ENCODE measurements at regions of chr4 and their contacts with region 1.

Region 1: GRCh38 chr4:140861359-140862176 is 105.4 kb upstream of the TBC1D9 start:
- DNase-seq: peak in 1 of 2 donors; percentile 14
- ATAC-seq: peak; percentile 80 to 88 (median 83)
- H3K4me3 ChIP-seq: no peak overlapping the region
- H3K27ac ChIP-seq: no peak overlapping the region
- H3K4me1 ChIP-seq: peaks cover 6% of the 10 kb centered on the region
- H3K27me3 ChIP-seq: no peaks in the 10 kb centered on the region
- CTCF ChIP-seq: peak; percentile 86

Region 2: DNA sequence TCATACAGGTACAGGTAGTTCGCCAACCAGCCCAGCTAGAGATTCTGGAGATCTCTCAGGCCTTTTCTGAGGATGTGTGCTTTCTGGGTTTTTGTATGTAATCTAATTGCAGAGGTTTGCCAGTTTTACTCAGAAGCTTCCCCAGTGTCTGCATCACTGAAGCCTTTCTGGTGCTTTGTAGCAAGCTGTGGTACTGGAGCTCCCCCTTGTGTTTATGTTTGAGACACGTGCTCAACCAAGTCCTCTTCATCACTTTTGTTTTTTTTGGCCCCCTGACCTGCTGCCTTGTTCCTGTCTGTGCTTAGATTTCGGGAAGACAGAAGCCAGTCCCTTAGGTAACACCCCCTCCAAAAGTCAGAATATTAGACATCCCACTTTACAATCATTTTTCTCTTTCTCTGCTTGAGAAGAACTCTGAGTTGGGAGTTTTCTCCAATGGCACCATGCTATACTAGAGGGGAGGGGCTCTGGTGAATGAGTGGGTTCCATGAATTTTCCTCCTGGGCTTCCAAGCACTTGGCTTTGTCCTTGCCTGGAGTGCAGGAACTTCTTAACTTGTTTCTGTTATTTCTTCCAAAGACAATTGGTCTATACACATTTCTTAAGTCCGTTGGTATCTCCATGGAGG is 23.0 kb after region 1 on chr4:
- intact Hi-C with region 1: loop called in 1 of 2 experiments (anchors 2 kb)
- DNase-seq: no peak
- ATAC-seq: peak in 2 of 4 donors; percentile 69 to 75
- H3K4me3 ChIP-seq: no peak overlapping the region
- H3K27ac ChIP-seq: no peak overlapping the region
- H3K4me1 ChIP-seq: peaks cover 20% of the 10 kb centered on the region
- H3K27me3 ChIP-seq: no peaks in the 10 kb centered on the region
- CTCF ChIP-seq: peak; percentile 61

Region 3: GRCh38 chr4:140901736-140902336 is 40.3 kb after region 1 on chr4:
- intact Hi-C with region 1: no loop called
- DNase-seq: no peak
- ATAC-seq: no peak
- H3K4me3 ChIP-seq: no peak overlapping the region
- H3K27ac ChIP-seq: no peak overlapping the region
- H3K4me1 ChIP-seq: peaks cover 8% of the 10 kb centered on the region
- H3K27me3 ChIP-seq: no peaks in the 10 kb centered on the region
- CTCF ChIP-seq: no peak

Region 4: DNA sequence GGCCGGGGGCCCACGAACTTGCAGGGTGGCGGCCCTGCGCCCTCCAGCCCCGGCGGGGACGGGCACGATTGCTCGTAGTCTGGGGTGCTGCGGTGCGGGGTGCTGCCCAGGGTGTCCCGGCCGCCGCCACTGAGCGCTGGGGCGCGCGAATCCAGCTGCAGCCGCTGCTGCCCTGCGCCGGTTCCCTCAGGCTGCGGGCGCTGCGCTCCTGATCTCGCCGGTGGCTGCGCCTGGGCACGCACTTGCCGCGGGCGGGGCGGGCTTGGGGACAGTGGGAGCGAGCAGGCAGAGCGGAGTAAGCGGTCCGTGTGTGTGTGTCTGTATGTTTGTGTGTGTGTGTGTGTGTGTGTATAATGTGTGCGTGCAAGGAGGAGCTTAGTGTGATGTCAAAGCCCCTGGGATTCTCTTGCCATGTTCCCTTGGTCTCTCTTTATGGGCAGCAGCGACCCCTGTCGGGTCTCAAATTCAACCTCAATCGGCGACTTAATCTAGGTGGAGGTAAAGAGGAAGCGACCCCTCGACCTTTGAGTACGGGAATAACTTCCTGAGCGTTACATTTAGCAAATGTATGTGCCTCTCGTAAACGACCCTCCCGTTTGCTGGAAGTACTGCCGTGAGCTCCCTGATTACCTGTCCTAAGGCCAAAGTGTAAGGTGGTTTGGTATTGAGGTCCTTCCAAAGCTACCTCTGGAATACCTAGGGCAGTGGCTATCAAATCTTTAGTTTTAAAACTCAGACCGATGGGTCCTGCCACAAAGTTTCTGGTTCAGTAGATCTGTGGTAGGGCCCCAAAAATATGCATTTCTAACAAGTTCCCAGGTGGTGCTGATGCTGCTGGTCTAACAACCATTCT is 271.8 kb after region 1 on chr4 and contains the start of gene RNF150:
- intact Hi-C with region 1: loop called (anchors 1 to 2 kb)
- DNase-seq: peak; percentile 69 to 85
- ATAC-seq: peak; percentile 81 to 88 (median 85)
- H3K4me3 ChIP-seq: peak within 1 kb of the TSS; percentile 93
- H3K27ac ChIP-seq: peak within 1 kb of the TSS; percentile 76
- H3K4me1 ChIP-seq: peaks cover 23% of the 10 kb centered on the region
- H3K27me3 ChIP-seq: no peaks in the 10 kb centered on the region
- CTCF ChIP-seq: peak; percentile 75
- total RNA-seq, gene RNF150: 3.2 to 12.6 (median 3.8) TPM

Region 5: DNA sequence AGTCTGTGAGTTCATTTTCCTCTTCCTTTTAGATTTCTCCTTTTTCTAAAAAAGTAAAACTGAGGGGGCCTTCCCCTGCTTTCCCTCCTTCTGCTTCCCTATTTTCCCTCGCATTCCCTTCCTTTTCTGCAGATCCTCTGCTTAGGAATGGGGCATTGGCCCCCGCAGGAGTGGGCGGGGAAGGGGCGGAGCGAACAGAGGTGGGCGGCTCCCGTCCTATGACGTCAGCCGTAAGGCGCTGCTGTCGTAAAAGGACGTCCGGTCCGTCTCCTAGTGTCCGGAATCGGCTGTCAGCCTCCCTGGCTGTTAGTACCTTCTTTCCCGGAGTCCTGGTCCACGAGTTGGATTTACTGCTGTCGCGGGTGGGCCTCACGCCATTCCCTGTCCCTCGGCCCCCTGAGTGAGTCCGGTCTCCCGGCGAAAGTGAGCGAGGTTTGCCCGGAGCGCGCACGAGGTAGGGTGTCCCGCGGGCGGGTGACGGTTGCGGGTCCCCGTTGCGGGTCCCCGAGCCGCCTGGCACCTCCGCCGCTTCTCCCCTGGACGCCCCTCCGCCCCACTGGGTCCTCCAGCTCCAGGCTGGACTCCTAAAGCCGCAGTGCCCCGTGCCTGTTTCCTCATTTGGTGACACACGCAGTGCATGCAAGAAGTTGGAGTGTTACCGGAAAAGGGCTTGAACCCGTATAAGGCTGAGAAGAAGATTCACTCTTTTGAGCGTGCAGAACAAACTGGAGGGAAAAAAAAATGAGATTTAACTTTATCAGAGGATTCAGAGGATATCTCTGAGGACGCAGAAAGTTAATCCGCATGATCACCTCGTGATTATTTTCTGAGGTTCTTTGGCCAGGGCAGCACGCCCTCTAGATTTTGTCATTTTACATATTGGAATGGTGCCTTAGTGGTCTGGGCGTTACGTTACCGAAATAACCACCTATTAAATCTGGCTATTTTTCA is 359.4 kb after region 1 on chr4 and contains the start of gene ZNF330:
- intact Hi-C with region 1: loop called in 1 of 2 experiments (anchors 5 kb)
- DNase-seq: peak; percentile 94 to 97
- ATAC-seq: peak; percentile 96 to 98 (median 98)
- H3K4me3 ChIP-seq: peak within 1 kb of the TSS; percentile 82
- H3K27ac ChIP-seq: peak within 1 kb of the TSS; percentile 98
- H3K4me1 ChIP-seq: peaks cover 21% of the 10 kb centered on the region
- H3K27me3 ChIP-seq: no peaks in the 10 kb centered on the region
- CTCF ChIP-seq: peak; percentile 19
- total RNA-seq, gene ZNF330: 43.7 to 65.0 (median 47.6) TPM

Region 6: GRCh38 chr4:141307241-141307689 is 445.7 kb after region 1 on chr4:
- intact Hi-C with region 1: no loop called
- DNase-seq: peak; percentile 48 to 68
- ATAC-seq: peak; percentile 99 to 100 (median 100)
- H3K4me3 ChIP-seq: no peak overlapping the region
- H3K27ac ChIP-seq: peak overlapping the region; percentile 38
- H3K4me1 ChIP-seq: no peaks in the 10 kb centered on the region
- H3K27me3 ChIP-seq: no peaks in the 10 kb centered on the region
- CTCF ChIP-seq: peak; percentile 81